ENCODE measurements at regions of chr9 and their contacts with region 1.

Region 1: GRCh38 chr9:125133403-125134329 is 9.7 kb downstream of the SCAI start:
- DNase-seq: peak; percentile 26
- H3K4me3 Mint-ChIP-seq: no peak overlapping the region
- H3K27ac Mint-ChIP-seq: peak overlapping the region; percentile 84
- H3K4me1 Mint-ChIP-seq: peaks cover 18% of the 10 kb centered on the region
- H3K27me3 Mint-ChIP-seq: no peaks in the 10 kb centered on the region

Region 2: DNA sequence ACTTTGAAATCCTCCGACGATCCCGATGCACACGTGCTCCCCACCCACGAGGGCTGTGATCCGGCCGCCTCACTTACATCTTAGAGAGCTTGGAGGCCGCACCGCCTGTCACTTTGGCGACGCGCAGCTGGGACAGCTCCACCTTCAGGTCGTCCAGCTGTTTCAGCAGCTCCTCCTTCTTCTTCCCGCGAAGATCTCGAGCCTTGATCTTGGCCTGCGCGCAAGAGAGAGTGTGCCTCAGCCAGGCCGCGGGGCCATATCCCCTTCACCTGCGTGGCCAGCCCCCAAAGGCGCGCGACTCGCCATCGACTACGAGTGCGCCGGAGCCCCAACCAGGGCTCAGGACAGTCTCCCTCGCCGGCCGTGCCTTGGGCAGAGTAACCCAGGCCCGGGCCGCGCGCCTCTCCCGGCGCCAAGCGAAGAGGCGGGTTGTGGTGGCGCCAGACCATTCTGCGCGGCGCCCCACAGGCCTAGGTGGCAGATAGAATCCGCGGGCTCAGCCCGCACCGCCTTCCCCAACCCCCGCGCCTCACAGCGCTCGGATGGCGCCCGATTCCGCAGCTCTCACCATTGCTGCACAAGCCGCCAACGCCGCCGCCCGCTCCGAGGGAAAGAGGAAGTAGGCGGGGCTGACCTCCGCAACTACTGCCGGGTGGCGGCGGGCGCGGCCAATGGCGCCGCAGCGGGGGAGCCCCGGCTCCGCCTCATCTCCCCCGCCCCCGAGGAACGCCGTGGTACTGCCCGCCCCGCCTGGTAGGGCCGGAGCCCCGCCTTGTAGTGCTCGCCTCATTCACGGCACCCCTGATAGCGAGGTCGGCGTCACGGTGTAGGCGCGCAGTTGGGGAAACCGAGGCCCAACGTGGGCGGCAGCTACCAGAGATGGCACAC is 272.1 kb before region 1 on chr9 and contains the starts of genes ARPC5L and RPL35:
- CTCF ChIA-PET with region 1: no interaction called
- POLR2A ChIA-PET with region 1: no interaction called
- intact Hi-C with region 1: no loop called
- DNase-seq: peak; percentile 96
- H3K4me3 Mint-ChIP-seq: peak within 1 kb of the TSS; percentile 88
- H3K27ac Mint-ChIP-seq: peak within 1 kb of the TSS; percentile 94
- H3K4me1 Mint-ChIP-seq: peaks cover 42% of the 10 kb centered on the region
- H3K27me3 Mint-ChIP-seq: no peaks in the 10 kb centered on the region
- total RNA-seq, gene ARPC5L: 104 to 108 TPM
- total RNA-seq, gene RPL35: 2,083 to 2,096 TPM

Region 3: GRCh38 chr9:125089331-125089730 is 44.3 kb before region 1 on chr9:
- CTCF ChIA-PET with region 1: no interaction called
- POLR2A ChIA-PET with region 1: no interaction called
- intact Hi-C with region 1: loop called (anchors 5 kb)
- DNase-seq: no peak
- H3K4me3 Mint-ChIP-seq: no peak overlapping the region
- H3K27ac Mint-ChIP-seq: no peak overlapping the region
- H3K4me1 Mint-ChIP-seq: peaks cover 7% of the 10 kb centered on the region
- H3K27me3 Mint-ChIP-seq: no peaks in the 10 kb centered on the region

Region 4: GRCh38 chr9:125121146-125121545 is 12.5 kb before region 1 on chr9:
- CTCF ChIA-PET with region 1: no interaction called
- POLR2A ChIA-PET with region 1: interaction called, 3 read pairs
- intact Hi-C with region 1: loop called (anchors 1 kb)
- DNase-seq: no peak
- H3K4me3 Mint-ChIP-seq: no peak overlapping the region
- H3K27ac Mint-ChIP-seq: peak overlapping the region; percentile 51
- H3K4me1 Mint-ChIP-seq: peaks cover 22% of the 10 kb centered on the region
- H3K27me3 Mint-ChIP-seq: no peaks in the 10 kb centered on the region